ENCODE measurements at regions of chr10 and their contacts with region 1.

Region 1: GRCh38 chr10:110460111-110460809 is 37.4 kb upstream of the DUSP5 start:
- DNase-seq: peak; percentile 92
- H3K4me3 ChIP-seq: peak overlapping the region; percentile 50
- H3K27ac ChIP-seq: peak overlapping the region; percentile 65
- H3K4me1 ChIP-seq: peaks cover 100% of the 10 kb centered on the region
- CTCF ChIP-seq: no peak

Region 2: GRCh38 chr10:110200503-110200902 is 259.8 kb before region 1 on chr10:
- CTCF ChIA-PET with region 1: no interaction called
- POLR2A ChIA-PET with region 1: no interaction called
- intact Hi-C with region 1: no loop called
- DNase-seq: no peak
- H3K4me3 ChIP-seq: no peak overlapping the region
- H3K27ac ChIP-seq: no peak overlapping the region
- H3K4me1 ChIP-seq: no peaks in the 10 kb centered on the region
- CTCF ChIP-seq: no peak

Region 3: DNA sequence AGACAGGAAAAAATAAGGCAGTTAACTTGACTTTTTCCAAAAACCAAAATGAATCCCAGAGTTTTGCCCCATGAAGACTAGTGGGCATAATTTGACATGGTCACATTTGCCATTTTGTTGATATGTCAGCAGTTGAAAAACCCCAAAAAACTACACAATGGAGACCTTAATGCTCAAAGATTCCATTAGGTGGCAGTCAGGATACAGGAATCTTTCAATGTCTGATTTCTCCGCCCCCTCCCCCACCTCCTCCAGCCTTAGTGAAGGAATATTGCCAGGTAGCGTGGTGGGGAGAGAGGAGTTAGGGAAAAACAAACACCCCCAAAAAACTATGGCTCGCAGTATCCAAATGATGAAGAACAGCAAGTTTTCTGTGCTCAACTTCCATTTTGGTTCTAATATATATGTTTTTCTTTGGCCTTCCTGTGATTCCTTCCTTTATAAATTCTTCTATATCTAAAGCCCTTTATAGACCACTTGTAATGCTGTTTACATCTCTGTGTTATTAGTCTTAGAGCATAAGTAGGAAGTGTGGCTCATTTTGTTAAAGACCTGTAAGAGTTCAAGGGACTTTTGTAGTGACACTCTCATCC is 148.8 kb before region 1 on chr10:
- CTCF ChIA-PET with region 1: no interaction called
- POLR2A ChIA-PET with region 1: interaction called, 7 read pairs
- intact Hi-C with region 1: loop called (anchors 1 kb)
- DNase-seq: peak; percentile 77
- H3K4me3 ChIP-seq: no peak overlapping the region
- H3K27ac ChIP-seq: no peak overlapping the region
- H3K4me1 ChIP-seq: peaks cover 36% of the 10 kb centered on the region
- CTCF ChIP-seq: peak; percentile 93

Region 4: GRCh38 chr10:110414563-110415309 is 45.5 kb before region 1 on chr10:
- CTCF ChIA-PET with region 1: interaction called, 3 read pairs
- POLR2A ChIA-PET with region 1: interaction called, 4 read pairs
- intact Hi-C with region 1: loop called (anchors 1 kb)
- DNase-seq: peak; percentile 96
- H3K4me3 ChIP-seq: peak overlapping the region; percentile 47
- H3K27ac ChIP-seq: peak overlapping the region; percentile 85
- H3K4me1 ChIP-seq: peaks cover 76% of the 10 kb centered on the region
- CTCF ChIP-seq: no peak

Region 5: DNA sequence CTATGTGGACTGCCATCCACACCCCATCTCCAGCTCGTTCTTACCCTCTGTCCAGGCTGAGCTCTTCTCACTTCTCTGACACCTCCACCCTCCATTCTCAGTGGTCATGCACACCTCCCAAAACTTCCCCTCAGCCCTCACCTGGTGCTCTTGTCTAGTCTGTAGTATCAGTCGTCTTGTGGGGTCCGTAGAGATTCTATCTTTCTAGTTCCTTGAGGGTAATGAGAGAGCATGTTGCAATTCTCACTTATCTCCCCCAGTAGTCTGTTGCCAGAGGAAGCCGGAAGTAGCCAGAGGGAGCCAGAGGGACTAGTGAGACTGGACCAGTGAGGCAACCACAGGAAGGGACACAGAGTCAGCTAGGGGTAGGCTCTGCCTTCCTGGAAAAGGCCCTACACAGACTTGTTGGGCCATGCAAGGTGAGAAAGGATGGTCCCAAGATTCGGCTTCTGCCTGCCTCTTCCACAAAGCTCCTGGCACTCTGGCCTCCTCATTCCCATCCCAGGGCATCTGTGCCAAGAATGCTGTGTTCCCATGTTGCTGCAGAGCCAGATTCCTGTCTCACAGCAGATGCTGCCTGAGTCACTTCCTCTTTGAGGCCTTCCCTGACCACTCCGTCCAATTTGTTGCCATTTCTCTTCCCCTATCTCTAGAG is 13.2 kb before region 1 on chr10:
- CTCF ChIA-PET with region 1: interaction called, 4 read pairs
- POLR2A ChIA-PET with region 1: interaction called, 11 read pairs
- intact Hi-C with region 1: no loop called
- DNase-seq: no peak
- H3K4me3 ChIP-seq: no peak overlapping the region
- H3K27ac ChIP-seq: no peak overlapping the region
- H3K4me1 ChIP-seq: peaks cover 7% of the 10 kb centered on the region
- CTCF ChIP-seq: no peak

Region 6: DNA sequence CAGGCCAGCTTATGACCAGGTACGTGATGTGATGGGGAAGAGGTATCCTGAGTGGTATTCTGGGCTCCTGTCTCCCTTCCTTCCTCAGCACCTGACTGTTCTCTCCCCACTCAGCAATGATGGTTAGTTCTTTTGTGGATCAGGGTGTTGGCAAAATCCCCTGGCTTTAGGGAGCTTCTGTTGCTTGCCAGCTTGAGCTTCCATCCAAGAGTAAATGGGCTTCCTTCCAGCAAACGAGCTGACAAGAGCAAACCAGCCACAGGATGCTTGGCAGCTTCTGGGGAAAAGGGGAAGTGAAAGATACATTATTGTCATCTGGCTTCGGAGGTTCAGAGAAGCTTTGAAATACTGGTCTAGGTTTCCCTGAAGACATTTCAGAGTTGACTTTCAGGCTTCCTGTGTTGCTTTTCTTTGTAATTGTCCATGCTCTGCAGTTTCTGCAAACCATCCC is 42.6 kb after region 1 on chr10:
- CTCF ChIA-PET with region 1: interaction called, 3 read pairs
- POLR2A ChIA-PET with region 1: no interaction called
- intact Hi-C with region 1: loop called (anchors 1 kb)
- DNase-seq: peak; percentile 92
- H3K4me3 ChIP-seq: peak overlapping the region; percentile 20
- H3K27ac ChIP-seq: peak overlapping the region; percentile 36
- H3K4me1 ChIP-seq: peaks cover 49% of the 10 kb centered on the region
- CTCF ChIP-seq: no peak

Region 7: GRCh38 chr10:110530131-110530831 is 70.0 kb after region 1 on chr10:
- CTCF ChIA-PET with region 1: no interaction called
- POLR2A ChIA-PET with region 1: no interaction called
- intact Hi-C with region 1: loop called (anchors 5 kb)
- DNase-seq: no peak
- H3K4me3 ChIP-seq: no peak overlapping the region
- H3K27ac ChIP-seq: no peak overlapping the region
- H3K4me1 ChIP-seq: peaks cover 52% of the 10 kb centered on the region
- CTCF ChIP-seq: no peak

Region 8: DNA sequence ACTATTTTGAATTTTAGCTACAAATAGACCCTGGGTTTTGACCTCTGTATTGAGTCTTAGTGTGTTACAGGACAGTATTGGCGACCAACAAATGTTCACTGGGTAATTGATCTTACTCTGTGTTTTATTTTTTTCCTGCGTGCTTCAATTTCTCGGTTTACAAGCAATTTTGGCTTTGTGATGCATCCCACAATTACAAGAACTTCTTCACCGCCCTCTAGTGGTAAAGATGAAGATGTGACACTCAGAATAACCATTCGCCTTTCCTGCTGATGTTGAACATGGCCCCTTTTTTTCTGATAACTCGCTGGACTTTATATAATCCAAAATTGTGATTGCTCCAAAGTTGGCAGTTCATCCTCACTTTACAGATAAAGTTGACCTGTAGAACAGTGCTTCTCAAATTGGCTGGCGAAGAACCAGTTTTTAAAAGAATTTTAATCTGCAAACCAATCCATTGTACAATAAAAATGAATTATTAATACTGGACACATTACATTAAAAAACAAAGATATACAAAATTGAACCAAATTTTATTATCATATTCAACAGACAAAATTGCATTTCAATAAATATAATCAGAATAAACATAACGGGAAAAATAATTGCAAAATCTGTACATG is 87.0 kb after region 1 on chr10:
- CTCF ChIA-PET with region 1: interaction called, 6 read pairs
- POLR2A ChIA-PET with region 1: no interaction called
- intact Hi-C with region 1: loop called (anchors 5 kb)
- DNase-seq: peak; percentile 86
- H3K4me3 ChIP-seq: no peak overlapping the region
- H3K27ac ChIP-seq: no peak overlapping the region
- H3K4me1 ChIP-seq: peaks cover 15% of the 10 kb centered on the region
- CTCF ChIP-seq: peak; percentile 98

Measured in OCI-LY7 (cell line).